Heart right ventricle (tissue), 16 donors: ENCODE measurements at regions of chr2 and their contacts with region 1.

Region 1: DNA sequence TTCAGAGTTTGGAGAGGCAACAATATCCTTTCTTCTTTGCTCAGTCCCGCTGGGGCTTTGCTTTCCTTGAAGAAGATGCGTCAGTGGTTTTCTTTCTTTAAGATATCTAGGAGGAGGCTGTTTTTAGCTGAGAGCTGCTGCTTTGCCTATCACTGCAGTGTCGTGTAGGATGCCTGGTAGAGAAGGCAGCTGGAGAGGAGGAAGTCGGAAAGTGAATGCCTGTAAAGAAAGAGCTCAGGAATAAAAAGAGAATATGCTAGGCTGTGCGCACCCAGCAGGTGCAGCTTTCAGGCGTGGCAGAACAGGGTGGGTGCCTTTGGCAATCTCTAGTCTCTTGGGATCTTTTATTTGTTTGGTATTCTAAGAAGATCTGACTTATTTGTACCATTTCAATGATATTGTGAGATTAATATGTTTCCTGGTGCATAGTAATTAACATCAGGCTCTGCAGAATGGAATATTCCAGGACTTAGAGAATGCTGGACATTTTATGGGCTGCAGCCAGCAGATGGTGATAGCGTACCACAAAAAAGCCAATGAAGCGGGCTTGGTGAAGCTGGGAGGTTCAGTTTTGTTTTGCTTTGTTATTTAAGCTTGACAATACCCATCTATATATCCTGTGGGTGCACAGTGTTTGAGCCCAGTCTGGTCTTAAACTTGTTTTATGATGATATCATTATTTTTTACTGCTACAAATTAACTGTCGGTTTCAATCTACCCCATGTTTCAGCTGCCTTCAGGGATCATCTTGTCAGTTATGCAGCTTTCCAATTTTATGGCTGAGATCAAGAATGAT is 34.9 kb downstream of the CAVIN2 start:
- DNase-seq: peak; percentile 36 to 65
- ATAC-seq: peak; percentile 64 to 95 (median 86)
- H3K4me3 ChIP-seq: peak overlapping the region in 5 of 10 donors; percentile 14 to 35 (median 31)
- H3K27ac ChIP-seq: no peak overlapping the region
- H3K4me1 ChIP-seq: peaks cover 0 to 10% (median 0%) of the 10 kb centered on the region in 9 donors
- H3K27me3 ChIP-seq: no peaks in the 10 kb centered on the region
- CTCF ChIP-seq: peak; percentile 74 to 94 (median 81)

Region 2: DNA sequence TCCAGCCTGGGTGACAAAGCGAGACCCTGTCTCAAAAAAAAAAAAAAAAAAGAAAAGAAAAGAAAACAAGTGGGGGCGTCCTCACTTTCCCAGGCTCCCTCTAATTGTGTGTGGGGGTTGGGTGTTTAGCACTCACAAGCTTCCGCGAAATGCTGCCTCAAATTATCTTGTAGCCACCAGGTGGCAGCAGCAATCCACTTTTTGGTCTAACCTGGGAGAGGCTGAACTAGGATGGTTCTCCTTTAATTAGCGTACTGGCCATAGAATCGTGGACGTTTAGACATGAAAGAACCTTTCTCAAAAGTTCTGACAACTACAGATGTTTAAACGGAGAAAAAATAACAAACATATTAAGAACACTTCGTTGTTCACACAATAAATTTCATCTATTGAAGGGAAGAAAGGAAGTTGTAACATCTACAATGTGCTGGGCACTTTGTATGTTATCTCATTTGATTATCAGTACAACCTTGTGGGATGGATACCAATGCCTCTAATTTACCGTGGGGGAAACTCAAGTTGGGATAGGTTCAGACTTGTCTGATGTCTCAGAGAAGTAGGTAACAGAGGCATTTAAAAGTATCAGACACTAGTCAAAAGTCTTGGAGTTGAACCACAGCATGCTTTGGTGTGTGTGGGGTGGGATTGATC is 256.8 kb before region 1 on chr2:
- intact Hi-C with region 1: loop called in 3 of 10 experiments (anchors 10 kb)
- DNase-seq: peak; percentile 58 to 82
- ATAC-seq: peak; percentile 86 to 95 (median 90)
- H3K4me3 ChIP-seq: no peak overlapping the region
- H3K27ac ChIP-seq: no peak overlapping the region
- H3K4me1 ChIP-seq: no peaks in the 10 kb centered on the region
- H3K27me3 ChIP-seq: peaks cover 0 to 23% (median 5%) of the 10 kb centered on the region in 7 donors
- CTCF ChIP-seq: peak; percentile 50 to 84 (median 74)

Region 3: GRCh38 chr2:191777351-191777750 is 34.7 kb before region 1 on chr2:
- intact Hi-C with region 1: loop called in 1 of 10 experiments (anchors 1 kb)
- DNase-seq: no peak
- ATAC-seq: no peak
- H3K4me3 ChIP-seq: no peak overlapping the region
- H3K27ac ChIP-seq: no peak overlapping the region
- H3K4me1 ChIP-seq: no peaks in the 10 kb centered on the region
- H3K27me3 ChIP-seq: no peaks in the 10 kb centered on the region
- CTCF ChIP-seq: no peak

Region 4: GRCh38 chr2:191869178-191869577 is 57.2 kb after region 1 on chr2:
- intact Hi-C with region 1: loop called in 1 of 10 experiments (anchors 2 kb)
- DNase-seq: no peak
- ATAC-seq: no peak
- H3K4me3 ChIP-seq: no peak overlapping the region
- H3K27ac ChIP-seq: peak overlapping the region in 3 of 10 donors; percentile 84 to 88 (median 88)
- H3K4me1 ChIP-seq: peaks cover 7 to 60% (median 42%) of the 10 kb centered on the region in 9 donors
- H3K27me3 ChIP-seq: no peaks in the 10 kb centered on the region
- CTCF ChIP-seq: peak in 3 of 9 donors; percentile 13 to 21 (median 16)

Region 5: DNA sequence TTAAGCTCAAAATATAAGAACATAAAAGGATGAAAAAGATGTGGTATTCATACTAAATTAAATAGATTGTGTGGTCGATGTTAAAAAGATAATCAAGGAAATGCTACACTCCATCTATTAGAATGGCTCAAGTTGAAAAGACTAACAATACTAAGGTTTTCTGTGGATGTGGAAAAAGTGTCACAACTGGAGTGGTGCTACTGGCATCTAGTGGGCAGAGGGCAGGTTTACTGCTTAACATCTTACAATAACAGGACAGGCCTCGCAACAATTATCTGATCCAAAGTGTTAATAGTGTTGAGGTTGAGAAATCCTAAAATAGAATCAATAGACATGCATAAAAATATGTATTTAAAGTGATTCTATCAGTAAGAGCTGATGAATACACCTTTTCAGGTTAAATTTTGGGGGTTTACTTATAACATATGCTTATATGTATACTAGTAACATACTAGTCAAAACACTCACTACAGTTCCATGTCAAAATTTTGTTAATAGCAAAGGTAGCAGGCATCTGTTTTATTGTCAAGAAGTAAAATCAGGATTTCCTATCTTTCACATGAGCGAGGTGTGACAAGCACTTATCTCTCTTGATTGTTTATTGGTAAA is 474.2 kb after region 1 on chr2:
- intact Hi-C with region 1: loop called in 1 of 10 experiments (anchors 10 kb)
- DNase-seq: no peak
- ATAC-seq: no peak
- H3K4me3 ChIP-seq: no peak overlapping the region
- H3K27ac ChIP-seq: no peak overlapping the region
- H3K4me1 ChIP-seq: peaks cover 0 to 5% (median 0%) of the 10 kb centered on the region in 9 donors
- H3K27me3 ChIP-seq: no peaks in the 10 kb centered on the region
- CTCF ChIP-seq: peak in 5 of 9 donors; percentile 3 to 31 (median 23)